ENCODE measurements at regions of chr15 and their contacts with region 1.

Region 1: GRCh38 chr15:40633143-40633542 is 39.1 kb downstream of the KNL1 start:
- DNase-seq: peak in 1 of 2 experiments; percentile 49
- H3K4me3 ChIP-seq: no peak overlapping the region
- H3K27ac ChIP-seq: no peak overlapping the region
- H3K4me1 ChIP-seq: no peaks in the 10 kb centered on the region
- H3K27me3 ChIP-seq: no peaks in the 10 kb centered on the region
- CTCF ChIP-seq: no peak

Region 2: DNA sequence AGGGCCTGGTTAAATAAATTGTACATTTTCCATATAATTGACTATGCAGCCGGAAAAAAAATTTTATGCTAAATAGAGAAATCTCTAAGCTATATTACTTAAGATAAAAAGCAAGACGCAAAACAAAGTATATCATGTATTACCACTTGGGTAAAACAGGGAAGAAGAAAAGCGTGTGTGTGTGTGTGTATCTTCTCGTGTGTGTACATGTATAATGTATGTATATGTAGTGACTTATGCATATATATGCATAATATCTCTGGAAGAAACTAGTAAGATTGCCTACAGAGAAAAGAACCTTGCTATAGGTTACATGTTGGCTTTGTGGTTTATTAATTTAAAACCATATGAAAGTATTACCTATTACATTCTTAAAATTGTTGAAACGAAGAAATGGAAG is 20.1 kb before region 1 on chr15:
- CTCF ChIA-PET with region 1: no interaction called
- POLR2A ChIA-PET with region 1: interaction called, 14 read pairs
- intact Hi-C with region 1: no loop called
- DNase-seq: no peak
- H3K4me3 ChIP-seq: no peak overlapping the region
- H3K27ac ChIP-seq: no peak overlapping the region
- H3K4me1 ChIP-seq: no peaks in the 10 kb centered on the region
- H3K27me3 ChIP-seq: no peaks in the 10 kb centered on the region
- CTCF ChIP-seq: no peak

Region 3: GRCh38 chr15:40660686-40661085 is 27.5 kb after region 1 on chr15:
- CTCF ChIA-PET with region 1: interaction called, 11 read pairs
- POLR2A ChIA-PET with region 1: no interaction called
- intact Hi-C with region 1: no loop called
- DNase-seq: no peak
- H3K4me3 ChIP-seq: no peak overlapping the region
- H3K27ac ChIP-seq: no peak overlapping the region
- H3K4me1 ChIP-seq: no peaks in the 10 kb centered on the region
- H3K27me3 ChIP-seq: no peaks in the 10 kb centered on the region
- CTCF ChIP-seq: no peak

Measured in PC-9 (cell line).